Left colon (tissue), 2 donors: ENCODE measurements at regions of chr4 and their contacts with region 1.

Region 1: GRCh38 chr4:102815981-102816380 is 11.4 kb downstream of the UBE2D3 start:
- DNase-seq: no peak
- ATAC-seq: no peak

Region 2: GRCh38 chr4:102760645-102761295 is 55.2 kb before region 1 on chr4 and contains the start of gene MANBA:
- intact Hi-C with region 1: loop called in 1 of 2 experiments (anchors 10 kb)
- DNase-seq: peak; percentile 88 to 93
- ATAC-seq: peak; percentile 98
- total RNA-seq, gene MANBA: 15.8 to 21.1 TPM